Heart left ventricle (tissue), 16 donors: ENCODE measurements at regions of chr1 and their contacts with region 1.

Region 1: GRCh38 chr1:216531263-216532239 is 108.3 kb upstream of the USH2A start:
- DNase-seq: no peak
- ATAC-seq: peak in 3 of 4 donors; percentile 20 to 50 (median 47)
- H3K4me3 ChIP-seq: peak overlapping the region in 11 of 12 donors; percentile 21 to 60 (median 42)
- H3K27ac ChIP-seq: peak overlapping the region in 1 of 12 donors; percentile 52
- H3K4me1 ChIP-seq: peaks cover 0 to 6% (median 0%) of the 10 kb centered on the region in 12 donors
- H3K27me3 ChIP-seq: no peaks in the 10 kb centered on the region
- CTCF ChIP-seq: no peak
- POLR2A ChIP-seq: no peak

Region 2: GRCh38 chr1:216600730-216601609 is 69.4 kb after region 1 on chr1:
- intact Hi-C with region 1: loop called in 1 of 10 experiments (anchors 5 kb)
- DNase-seq: peak; percentile 71 to 88 (median 83)
- ATAC-seq: peak; percentile 88 to 99 (median 95)
- H3K4me3 ChIP-seq: peak overlapping the region; percentile 46 to 81 (median 67)
- H3K27ac ChIP-seq: peak overlapping the region; percentile 87 to 97 (median 94)
- H3K4me1 ChIP-seq: peaks cover 0 to 13% (median 4%) of the 10 kb centered on the region in 12 donors
- H3K27me3 ChIP-seq: no peaks in the 10 kb centered on the region
- CTCF ChIP-seq: peak in 11 of 12 donors; percentile 18 to 69 (median 55)
- POLR2A ChIP-seq: peak in 1 of 2 donors; percentile 49